ENCODE measurements at regions of chr18 and their contacts with region 1.

Region 1: DNA sequence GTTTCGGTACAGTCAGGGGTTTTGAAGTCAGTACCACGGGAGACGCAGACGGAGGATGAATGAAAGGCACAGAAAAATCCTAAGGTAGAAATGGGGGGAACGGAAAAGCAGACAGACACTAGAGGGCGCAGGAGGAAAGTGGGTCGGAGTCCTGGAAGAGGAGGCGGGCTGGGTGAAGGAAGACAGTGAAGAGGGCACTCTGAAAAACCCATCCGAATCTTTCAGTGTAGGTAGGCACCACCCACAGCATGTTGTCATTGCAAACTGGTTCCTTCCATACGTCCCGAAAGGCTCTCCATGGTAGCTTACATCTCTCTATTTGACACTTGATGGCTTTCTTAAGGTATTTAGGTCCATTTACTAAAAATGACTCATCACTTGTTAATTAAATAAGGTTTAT is 18.5 kb upstream of the ZNF236 start:
- DNase-seq: peak; percentile 87
- H3K4me3 Mint-ChIP-seq: peak overlapping the region; percentile 15
- H3K27ac Mint-ChIP-seq: no peak overlapping the region
- H3K4me1 Mint-ChIP-seq: peaks cover 9% of the 10 kb centered on the region
- H3K27me3 Mint-ChIP-seq: peaks cover 5% of the 10 kb centered on the region

Region 2: DNA sequence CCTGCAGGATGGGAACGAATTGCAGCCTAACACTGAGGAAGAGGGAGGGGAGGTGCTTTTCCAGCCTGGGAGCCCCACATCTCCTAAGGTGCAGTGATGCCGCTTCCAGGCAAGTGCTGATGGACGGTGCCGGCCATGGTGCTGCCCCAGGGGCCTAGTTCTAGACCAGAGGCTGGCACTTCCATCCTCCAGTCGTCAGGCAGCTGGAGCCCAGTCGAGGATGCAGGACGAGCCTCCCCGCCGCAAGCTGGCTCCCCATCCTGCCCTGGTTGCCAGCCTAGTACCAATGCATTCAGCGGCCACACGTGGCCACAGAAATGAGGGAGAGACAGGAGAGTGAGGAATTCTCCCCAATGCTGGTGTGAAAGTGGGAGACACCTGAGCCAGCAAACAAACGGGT is 722.3 kb before region 1 on chr18:
- CTCF ChIA-PET with region 1: no interaction called
- intact Hi-C with region 1: no loop called
- DNase-seq: no peak
- H3K4me3 Mint-ChIP-seq: no peak overlapping the region
- H3K27ac Mint-ChIP-seq: no peak overlapping the region
- H3K4me1 Mint-ChIP-seq: no peaks in the 10 kb centered on the region
- H3K27me3 Mint-ChIP-seq: no peaks in the 10 kb centered on the region

Region 3: DNA sequence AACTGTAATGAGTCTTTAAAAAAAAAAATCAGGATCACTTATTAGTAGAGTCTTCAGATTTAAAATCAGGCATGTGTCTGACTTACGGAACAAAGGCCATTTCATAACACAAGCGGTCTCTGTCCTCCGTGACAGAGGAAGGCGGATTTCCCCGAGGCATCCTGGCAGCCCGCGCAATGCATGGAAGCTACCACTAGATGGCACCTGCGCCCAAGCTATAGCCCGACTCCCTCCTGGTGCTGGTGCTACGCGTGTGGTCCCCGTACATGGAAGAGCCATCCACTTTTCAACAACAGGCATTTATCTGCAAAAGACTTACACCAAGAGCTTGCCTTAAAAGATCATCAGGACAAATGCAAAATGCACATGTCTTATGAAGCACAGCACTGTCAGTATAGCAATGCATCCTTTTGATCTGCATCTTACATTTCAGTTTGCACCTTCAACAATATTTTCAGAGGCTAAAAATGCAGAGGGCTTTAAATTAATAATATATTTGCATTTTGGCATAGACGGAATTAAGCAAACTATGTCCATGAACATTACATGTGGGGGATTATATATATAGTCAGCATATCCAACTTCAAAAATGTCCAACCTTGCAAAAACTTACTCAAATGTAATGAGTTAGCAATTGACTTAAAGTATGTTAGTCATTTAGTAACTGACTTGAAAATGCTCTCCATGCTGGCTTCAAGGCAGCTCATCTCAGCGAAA is 404.8 kb before region 1 on chr18:
- CTCF ChIA-PET with region 1: interaction called, 3 read pairs
- intact Hi-C with region 1: loop called (anchors 2 kb)
- DNase-seq: peak; percentile 88
- H3K4me3 Mint-ChIP-seq: no peak overlapping the region
- H3K27ac Mint-ChIP-seq: no peak overlapping the region
- H3K4me1 Mint-ChIP-seq: peaks cover 6% of the 10 kb centered on the region
- H3K27me3 Mint-ChIP-seq: no peaks in the 10 kb centered on the region

Region 4: DNA sequence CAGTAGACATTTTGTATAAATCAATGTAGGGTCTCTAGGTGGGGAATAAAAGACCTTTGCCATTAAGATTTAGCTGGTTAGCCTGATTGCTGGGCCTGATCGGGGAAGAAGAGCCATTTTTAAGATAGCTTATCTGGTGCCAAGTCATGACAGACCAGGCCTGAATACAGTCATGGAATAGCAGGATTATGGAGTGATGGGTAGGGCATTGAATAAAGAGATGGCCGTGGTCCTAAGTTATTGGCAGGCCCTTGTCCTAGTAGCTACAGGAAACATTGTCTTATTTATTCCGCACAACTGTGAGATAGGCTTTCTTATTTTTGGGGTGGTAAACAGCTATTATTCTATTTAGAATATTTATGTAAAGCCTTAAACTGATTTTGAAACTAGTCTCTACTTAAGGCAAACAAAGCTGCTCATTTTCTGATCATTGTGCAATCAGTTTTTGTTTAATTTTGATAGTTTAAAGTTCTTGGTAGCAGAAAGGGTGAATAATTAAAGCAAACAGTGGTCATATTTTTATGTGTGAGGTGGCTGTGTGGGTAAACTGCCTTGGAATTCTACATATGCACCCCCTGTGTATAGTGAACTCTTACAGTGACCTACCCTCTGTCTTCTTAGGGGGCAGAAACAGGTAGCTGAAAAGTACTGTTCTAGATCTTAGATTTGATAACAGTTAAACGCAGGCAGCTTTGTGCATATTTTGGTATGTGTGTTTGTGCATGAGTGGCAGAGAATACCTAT is 41.1 kb after region 1 on chr18:
- CTCF ChIA-PET with region 1: interaction called, 12 read pairs
- intact Hi-C with region 1: no loop called
- DNase-seq: no peak
- H3K4me3 Mint-ChIP-seq: no peak overlapping the region
- H3K27ac Mint-ChIP-seq: no peak overlapping the region
- H3K4me1 Mint-ChIP-seq: peaks cover 25% of the 10 kb centered on the region
- H3K27me3 Mint-ChIP-seq: no peaks in the 10 kb centered on the region

Region 5: GRCh38 chr18:76903386-76903785 is 99.6 kb after region 1 on chr18:
- CTCF ChIA-PET with region 1: interaction called, 26 read pairs
- intact Hi-C with region 1: no loop called
- DNase-seq: no peak
- H3K4me3 Mint-ChIP-seq: no peak overlapping the region
- H3K27ac Mint-ChIP-seq: no peak overlapping the region
- H3K4me1 Mint-ChIP-seq: no peaks in the 10 kb centered on the region
- H3K27me3 Mint-ChIP-seq: no peaks in the 10 kb centered on the region

Region 6: GRCh38 chr18:76982841-76983587 is 179.2 kb after region 1 on chr18:
- CTCF ChIA-PET with region 1: interaction called, 117 read pairs
- intact Hi-C with region 1: loop called (anchors 1 kb)
- DNase-seq: peak; percentile 96
- H3K4me3 Mint-ChIP-seq: no peak overlapping the region
- H3K27ac Mint-ChIP-seq: no peak overlapping the region
- H3K4me1 Mint-ChIP-seq: peaks cover 5% of the 10 kb centered on the region
- H3K27me3 Mint-ChIP-seq: no peaks in the 10 kb centered on the region

Region 7: DNA sequence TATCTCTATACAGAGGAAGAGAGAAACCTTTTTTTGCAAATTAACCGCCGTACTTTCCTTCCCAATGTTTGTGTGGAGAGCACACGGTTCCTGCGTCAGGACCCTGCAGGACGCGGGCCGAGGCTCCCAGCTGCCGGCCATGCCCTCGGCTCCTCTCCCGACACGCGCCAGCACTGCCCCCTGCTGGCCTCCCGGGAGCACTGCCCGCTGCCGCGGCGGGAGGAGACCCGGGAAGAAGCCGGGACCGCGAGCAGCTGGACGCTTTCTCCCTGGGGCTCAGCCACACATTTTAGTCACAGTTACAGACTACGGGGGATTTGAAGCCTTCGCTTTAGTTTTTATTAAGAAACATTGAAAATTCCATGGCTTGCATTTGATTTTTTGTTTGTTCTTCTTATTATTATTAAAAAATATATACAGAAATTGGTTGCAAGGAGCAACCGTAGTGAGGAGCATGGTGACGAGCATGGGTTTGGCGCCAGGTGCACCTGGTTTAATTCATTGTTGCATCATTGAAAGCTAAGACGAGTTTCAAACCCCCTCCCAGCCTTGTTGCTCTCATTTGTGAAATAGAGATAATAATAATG is 847.1 kb after region 1 on chr18:
- CTCF ChIA-PET with region 1: interaction called, 3 read pairs
- intact Hi-C with region 1: loop called (anchors 2 kb)
- DNase-seq: peak; percentile 70
- H3K4me3 Mint-ChIP-seq: no peak overlapping the region
- H3K27ac Mint-ChIP-seq: no peak overlapping the region
- H3K4me1 Mint-ChIP-seq: no peaks in the 10 kb centered on the region
- H3K27me3 Mint-ChIP-seq: peaks cover 18% of the 10 kb centered on the region